Right ventricle myocardium inferior (tissue), 1 donor: ENCODE measurements at regions of chr2 and their contacts with region 1.

Region 1: GRCh38 chr2:218322895-218323808 is 30.8 kb upstream of the TMBIM1 start:
- DNase-seq: peak; percentile 83
- ATAC-seq: peak; percentile 87

Region 2: GRCh38 chr2:218367415-218368153 is 44.4 kb after region 1 on chr2:
- intact Hi-C with region 1: loop called (anchors 5 kb)
- DNase-seq: peak; percentile 97
- ATAC-seq: peak; percentile 97

Region 3: DNA sequence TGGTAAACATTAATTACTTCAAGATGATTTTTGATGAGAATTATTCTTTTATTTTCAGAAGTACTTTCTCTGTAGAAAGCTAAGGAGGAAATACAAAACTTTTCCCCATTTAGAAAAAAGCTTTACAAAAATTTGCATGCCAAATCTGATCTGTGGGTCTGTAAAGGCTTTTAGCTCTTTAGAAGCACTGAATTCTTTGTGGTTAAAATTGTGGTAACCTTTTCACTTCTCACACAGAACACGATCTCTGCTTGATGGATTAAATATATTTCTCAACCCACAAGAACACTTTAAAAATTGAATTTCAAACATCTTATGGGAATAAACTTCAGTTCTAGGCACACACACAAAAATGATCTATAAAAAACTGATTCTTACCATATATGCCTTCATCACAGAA is 159.5 kb after region 1 on chr2:
- intact Hi-C with region 1: no loop called
- DNase-seq: no peak
- ATAC-seq: no peak

Region 4: DNA sequence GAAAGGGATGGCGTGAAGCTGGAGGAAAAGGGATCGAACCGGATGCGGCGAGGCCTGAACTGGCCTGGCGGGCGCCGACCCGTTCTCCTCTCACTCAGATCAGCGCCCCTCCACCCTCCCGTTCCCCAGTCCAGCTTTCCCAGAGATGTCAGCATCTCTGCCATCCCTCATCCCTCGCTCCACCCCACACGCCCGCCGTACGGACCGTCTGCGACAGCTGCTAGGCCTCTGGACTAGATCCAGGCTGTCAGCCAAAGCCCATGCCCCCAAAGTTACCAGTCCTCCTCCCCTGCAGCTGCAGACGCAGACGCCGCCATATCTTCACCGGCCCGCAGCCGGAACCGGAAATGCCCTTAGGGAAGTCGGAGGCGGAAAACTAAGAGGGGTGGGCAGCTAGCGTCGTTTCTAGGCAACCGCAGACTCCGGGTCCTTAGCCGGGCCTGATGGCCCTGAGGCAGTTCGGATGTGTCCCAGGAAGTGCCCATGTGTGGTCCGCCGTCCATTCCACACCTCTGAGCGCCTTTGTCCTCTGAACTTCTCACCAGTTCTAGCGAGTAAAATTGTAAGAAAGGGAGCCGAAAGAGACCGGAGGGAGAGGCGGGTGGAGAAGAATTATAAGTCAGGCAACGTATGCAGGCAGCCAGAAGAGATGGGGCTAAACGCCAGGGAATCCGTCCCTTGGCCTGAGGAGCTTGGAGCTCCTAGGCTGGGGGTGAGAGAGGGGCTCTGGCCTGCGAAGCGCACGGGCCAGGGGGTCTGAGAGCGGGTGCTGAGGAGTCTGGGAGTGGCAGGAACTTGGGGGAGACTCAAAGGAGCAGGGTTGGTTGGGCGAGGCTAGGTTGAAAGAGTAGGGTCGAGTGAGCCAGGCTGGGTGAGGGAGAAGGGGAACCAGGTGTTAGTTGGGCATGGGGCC is 348.8 kb after region 1 on chr2 and contains the starts of genes RNF25 and STK36:
- intact Hi-C with region 1: no loop called
- DNase-seq: peak; percentile 93
- ATAC-seq: peak; percentile 94
- total RNA-seq, gene RNF25: 15.3 TPM
- total RNA-seq, gene STK36: 7.5 TPM